Calu3 (cell line): ENCODE measurements at regions of chr4 and their contacts with region 1.

Region 1: DNA sequence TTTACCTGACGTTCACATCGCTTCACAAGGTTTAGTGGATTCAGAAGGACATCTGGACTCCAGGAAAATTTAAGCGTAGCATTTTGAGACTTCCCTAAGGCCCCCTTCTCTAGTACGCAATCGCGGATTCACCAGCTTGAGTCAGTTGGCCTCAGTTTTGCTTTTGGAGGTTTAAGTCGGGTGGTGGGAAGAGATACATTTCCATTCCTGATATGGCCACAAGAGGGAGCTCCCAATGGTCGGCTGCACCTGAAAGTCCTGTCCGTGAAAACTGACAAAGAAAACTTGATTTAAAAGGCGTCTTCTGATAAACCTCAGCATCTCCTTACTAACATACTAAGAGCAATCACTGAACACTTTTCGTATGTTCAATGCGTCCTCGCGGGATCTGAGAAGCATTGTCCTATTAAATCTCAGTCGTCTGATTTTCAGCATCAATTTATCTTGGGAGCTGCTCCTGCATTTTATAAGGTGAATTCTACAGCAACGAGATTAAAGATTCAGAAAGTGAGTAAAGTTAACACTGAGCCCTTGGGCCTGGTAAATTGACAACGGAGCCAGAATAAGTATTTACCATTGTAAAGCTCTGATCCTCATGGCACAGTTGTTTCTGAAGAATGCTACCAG is 50.6 kb downstream of the LGI2 start:
- DNase-seq: peak; percentile 53
- H3K4me3 Mint-ChIP-seq: no peak overlapping the region
- H3K27ac Mint-ChIP-seq: no peak overlapping the region
- H3K4me1 Mint-ChIP-seq: no peaks in the 10 kb centered on the region
- H3K27me3 Mint-ChIP-seq: peaks cover 6% of the 10 kb centered on the region
- CTCF ChIP-seq: peak; percentile 47

Region 2: DNA sequence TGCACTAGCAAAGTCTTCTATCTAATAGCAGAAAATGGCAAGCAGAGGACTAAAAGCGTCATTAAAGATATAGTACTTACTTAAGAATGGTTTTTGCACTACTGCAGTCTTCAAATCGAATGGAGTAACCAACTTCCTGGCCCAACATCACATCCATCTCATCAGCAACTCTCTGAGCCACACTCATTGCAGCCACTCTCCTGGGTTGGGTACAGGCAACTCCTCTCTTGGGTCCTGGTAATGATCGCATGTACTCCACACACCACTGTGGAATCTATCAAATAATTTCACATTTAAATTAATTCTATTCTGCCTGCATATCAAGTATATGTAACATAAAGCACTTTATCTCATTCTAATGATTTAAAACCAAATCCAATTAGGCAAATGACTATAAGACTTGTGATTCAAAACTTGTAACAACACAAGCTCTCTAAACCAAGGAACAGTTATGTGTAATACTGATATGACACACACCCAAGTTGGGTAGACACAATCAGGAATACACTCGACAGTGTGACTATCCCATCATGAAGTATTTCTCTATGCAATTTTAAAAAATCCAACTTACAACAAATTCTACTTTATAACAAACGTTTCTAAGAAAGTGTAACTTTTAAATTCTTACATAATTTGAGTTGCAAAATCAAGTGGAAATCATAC is 409.5 kb before region 1 on chr4:
- CTCF ChIA-PET with region 1: no interaction called
- intact Hi-C with region 1: loop called (anchors 10 kb)
- DNase-seq: no peak
- H3K4me3 Mint-ChIP-seq: peak overlapping the region; percentile 9
- H3K27ac Mint-ChIP-seq: no peak overlapping the region
- H3K4me1 Mint-ChIP-seq: peaks cover 52% of the 10 kb centered on the region
- H3K27me3 Mint-ChIP-seq: no peaks in the 10 kb centered on the region
- CTCF ChIP-seq: no peak

Region 3: DNA sequence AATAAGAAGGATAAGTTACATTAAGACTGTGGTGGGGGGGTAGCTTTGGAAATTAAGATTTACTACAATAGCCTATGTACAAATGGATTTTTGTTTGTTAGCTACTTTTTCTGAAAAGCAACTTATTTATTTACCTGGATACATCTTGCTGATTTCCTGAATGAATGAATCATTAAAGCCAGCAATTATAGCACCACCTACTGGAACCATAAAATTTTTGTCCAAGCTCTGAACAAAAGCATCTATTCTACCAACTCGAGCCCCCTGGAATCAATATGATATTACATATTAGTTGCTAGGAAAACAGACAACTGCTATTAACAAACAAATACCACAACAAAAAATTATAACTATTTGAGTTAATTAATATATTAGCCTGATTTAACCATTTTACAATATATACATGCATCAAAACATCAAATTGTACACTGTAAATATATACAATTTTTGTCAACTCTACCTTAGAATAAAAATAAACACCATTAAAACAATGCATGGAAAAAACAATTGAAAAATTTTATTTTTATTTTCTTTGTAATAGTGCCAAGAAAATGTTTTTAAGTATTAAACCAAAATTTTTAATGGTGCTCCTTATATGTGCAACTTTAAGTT is 164.8 kb after region 1 on chr4:
- CTCF ChIA-PET with region 1: interaction called, 5 read pairs
- intact Hi-C with region 1: loop called (anchors 2 kb)
- DNase-seq: no peak
- H3K4me3 Mint-ChIP-seq: no peak overlapping the region
- H3K27ac Mint-ChIP-seq: no peak overlapping the region
- H3K4me1 Mint-ChIP-seq: no peaks in the 10 kb centered on the region
- H3K27me3 Mint-ChIP-seq: no peaks in the 10 kb centered on the region
- CTCF ChIP-seq: no peak